Ascending aorta (tissue), 2 donors: ENCODE measurements at regions of chr12 and their contacts with region 1.

Region 1: DNA sequence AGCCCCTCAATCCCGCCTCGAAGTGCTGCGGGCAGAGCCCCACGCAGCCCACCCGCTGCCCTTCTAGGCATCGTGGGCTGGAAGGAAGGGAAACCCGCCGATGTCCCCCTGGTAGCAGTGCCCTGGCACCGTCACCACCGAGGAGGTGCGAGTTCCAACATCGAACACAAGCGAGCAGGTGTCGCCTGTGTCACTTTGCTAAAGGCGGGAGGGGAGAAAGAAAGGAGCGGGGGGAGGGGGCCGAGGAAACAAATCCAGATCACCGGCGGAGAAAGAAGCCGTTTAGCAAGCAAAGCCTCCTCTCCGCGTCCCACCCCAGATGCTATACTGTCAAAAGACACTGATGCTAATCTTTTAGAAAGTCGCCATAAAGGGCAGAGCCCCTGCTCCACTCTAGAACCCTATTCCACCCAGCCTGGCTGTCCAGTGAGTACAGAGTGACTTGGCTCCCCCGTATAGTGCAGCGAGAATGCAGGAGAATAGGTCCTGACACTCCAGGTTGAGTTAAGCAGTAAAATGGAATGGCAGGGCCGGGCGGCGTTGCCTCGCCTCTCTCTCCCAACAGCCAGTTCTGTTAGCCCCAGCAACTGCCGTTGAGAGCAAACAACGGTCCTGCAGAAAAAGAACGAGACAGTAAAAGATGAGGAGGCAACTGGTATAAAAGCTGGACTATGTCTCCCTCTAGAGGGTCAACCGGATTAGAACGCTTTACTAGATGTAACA is 67.9 kb upstream of the USP15 start:
- DNase-seq: peak in 1 of 2 donors; percentile 79
- H3K4me3 ChIP-seq: peak overlapping the region; percentile 62 to 70
- H3K27ac ChIP-seq: peak overlapping the region in 1 of 2 donors; percentile 28
- H3K4me1 ChIP-seq: peaks cover 8 to 14% of the 10 kb centered on the region in 2 donors
- H3K27me3 ChIP-seq: no peaks in the 10 kb centered on the region
- CTCF ChIP-seq: peak; percentile 51 to 78 (median 68)

Region 2: GRCh38 chr12:61536525-61536924 is 655.8 kb before region 1 on chr12:
- intact Hi-C with region 1: loop called (anchors 1 kb)
- DNase-seq: no peak
- H3K4me3 ChIP-seq: no peak overlapping the region
- H3K27ac ChIP-seq: peak overlapping the region; percentile 46 to 67
- H3K4me1 ChIP-seq: no peaks in the 10 kb centered on the region
- H3K27me3 ChIP-seq: no peaks in the 10 kb centered on the region
- CTCF ChIP-seq: no peak

Region 3: GRCh38 chr12:62078020-62078419 is 114.3 kb before region 1 on chr12:
- intact Hi-C with region 1: no loop called
- DNase-seq: no peak
- H3K4me3 ChIP-seq: no peak overlapping the region
- H3K27ac ChIP-seq: peak overlapping the region; percentile 64 to 74
- H3K4me1 ChIP-seq: peaks cover 0 to 14% of the 10 kb centered on the region in 2 donors
- H3K27me3 ChIP-seq: no peaks in the 10 kb centered on the region
- CTCF ChIP-seq: no peak